HepG2 (cell line): ENCODE measurements at regions of chr22 and their contacts with region 1.

Region 1: DNA sequence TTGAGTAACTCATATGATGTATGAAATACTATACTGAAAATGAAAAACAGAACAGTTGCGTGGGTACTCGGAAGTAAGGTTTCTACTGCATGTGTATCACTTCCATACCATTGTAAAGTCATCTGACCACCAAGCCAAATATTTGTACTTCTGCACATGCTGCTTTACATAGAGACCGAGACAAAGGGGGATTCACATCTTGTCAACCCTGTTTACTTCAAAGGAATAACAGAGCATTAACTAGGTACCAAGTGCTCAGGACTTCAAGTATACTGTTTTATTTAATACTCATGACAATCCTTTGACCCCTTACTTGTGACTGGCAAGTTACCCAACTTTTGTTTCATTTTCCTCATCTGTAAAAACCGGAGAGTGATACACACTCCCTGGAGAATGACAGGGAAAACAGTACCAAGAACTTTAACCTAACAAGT is 9.9 kb downstream of the MAPK1 start:
- DNase-seq: peak; percentile 97
- ATAC-seq: peak; percentile 94
- H3K4me3 ChIP-seq: peak overlapping the region; percentile 39 to 55 (median 51); a peak in 5 of 6 replicates
- H3K27ac ChIP-seq: peak overlapping the region; percentile 76
- H3K4me1 ChIP-seq: peaks cover 83% of the 10 kb centered on the region
- H3K27me3 ChIP-seq: no peaks in the 10 kb centered on the region
- CTCF ChIP-seq: no peak
- EP300 ChIP-seq: peak in 1 of 2 experiments; percentile 57; a peak in 2 of 4 replicates
- POLR2A ChIP-seq: no peak
- RAD21 ChIP-seq: no peak

Region 2: DNA sequence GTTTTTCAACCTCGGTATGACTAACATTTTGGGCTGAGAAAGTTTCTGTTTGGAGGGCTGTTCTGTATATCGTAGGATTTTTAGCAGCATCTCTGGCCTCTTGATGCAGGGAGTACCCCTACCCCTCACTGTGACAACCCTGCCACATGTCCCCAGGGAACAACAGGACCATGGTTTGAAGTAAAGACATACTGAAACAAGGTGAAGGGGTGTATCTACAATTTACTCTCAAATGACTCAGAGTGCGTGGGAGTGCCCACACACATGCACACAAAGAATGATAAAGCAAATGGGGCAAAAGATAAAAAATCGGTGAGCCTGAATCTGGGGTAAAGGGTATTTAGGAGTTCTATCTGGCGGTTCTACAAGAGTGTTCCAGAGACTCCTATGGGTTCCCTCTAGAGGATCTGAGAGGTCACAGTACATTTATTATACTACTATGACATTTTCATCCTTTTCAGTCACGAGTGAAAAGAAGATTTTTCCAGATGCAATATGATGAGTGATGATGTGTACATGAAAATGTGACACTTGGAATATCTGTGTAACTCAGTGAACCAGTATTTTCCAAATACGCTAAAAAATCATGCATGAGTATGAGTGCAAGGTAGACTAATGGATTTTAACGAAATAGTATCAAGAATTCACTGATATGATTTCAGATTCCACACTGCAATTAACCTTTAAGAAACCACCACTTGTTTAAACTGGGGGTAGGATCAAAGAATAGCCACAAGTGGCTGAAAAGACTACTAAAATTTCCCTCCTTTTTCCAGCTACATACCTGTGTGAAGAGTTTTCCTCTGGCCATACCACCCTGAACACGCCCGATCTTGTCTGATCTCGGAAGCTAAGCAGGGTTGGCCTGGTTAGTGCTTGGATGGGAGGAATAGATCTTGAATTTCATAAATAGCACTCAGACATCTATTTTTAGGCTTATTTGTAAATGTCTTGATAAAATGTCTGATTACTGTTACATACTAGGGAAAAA is 65.6 kb before region 1 on chr22:
- CTCF ChIA-PET with region 1: no interaction called
- POLR2A ChIA-PET with region 1: no interaction called
- in situ Hi-C with region 1: loop called (anchors 10 kb)
- intact Hi-C with region 1: loop called (anchors 5 kb)
- DNase-seq: no peak
- ATAC-seq: no peak
- H3K4me3 ChIP-seq: no peak overlapping the region
- H3K27ac ChIP-seq: no peak overlapping the region
- H3K4me1 ChIP-seq: no peaks in the 10 kb centered on the region
- H3K27me3 ChIP-seq: no peaks in the 10 kb centered on the region
- CTCF ChIP-seq: no peak
- EP300 ChIP-seq: no peak
- POLR2A ChIP-seq: no peak
- RAD21 ChIP-seq: no peak

Region 3: GRCh38 chr22:21841422-21841821 is 16.1 kb before region 1 on chr22:
- CTCF ChIA-PET with region 1: no interaction called
- POLR2A ChIA-PET with region 1: no interaction called
- in situ Hi-C with region 1: no loop called
- intact Hi-C with region 1: no loop called
- DNase-seq: peak; percentile 24
- ATAC-seq: no peak
- H3K4me3 ChIP-seq: no peak overlapping the region
- H3K27ac ChIP-seq: no peak overlapping the region
- H3K4me1 ChIP-seq: peaks cover 57% of the 10 kb centered on the region
- H3K27me3 ChIP-seq: no peaks in the 10 kb centered on the region
- CTCF ChIP-seq: no peak
- EP300 ChIP-seq: no peak
- POLR2A ChIP-seq: no peak
- RAD21 ChIP-seq: no peak

Region 4: GRCh38 chr22:21873619-21874018 is 16.1 kb after region 1 on chr22:
- CTCF ChIA-PET with region 1: no interaction called
- POLR2A ChIA-PET with region 1: no interaction called
- in situ Hi-C with region 1: no loop called
- intact Hi-C with region 1: no loop called
- DNase-seq: no peak
- ATAC-seq: no peak
- H3K4me3 ChIP-seq: no peak overlapping the region
- H3K27ac ChIP-seq: no peak overlapping the region
- H3K4me1 ChIP-seq: peaks cover 5% of the 10 kb centered on the region
- H3K27me3 ChIP-seq: no peaks in the 10 kb centered on the region
- CTCF ChIP-seq: no peak
- EP300 ChIP-seq: no peak
- POLR2A ChIP-seq: no peak
- RAD21 ChIP-seq: no peak